Aorta (tissue), 5 donors: ENCODE measurements at regions of chr9 and their contacts with region 1.

Region 1: DNA sequence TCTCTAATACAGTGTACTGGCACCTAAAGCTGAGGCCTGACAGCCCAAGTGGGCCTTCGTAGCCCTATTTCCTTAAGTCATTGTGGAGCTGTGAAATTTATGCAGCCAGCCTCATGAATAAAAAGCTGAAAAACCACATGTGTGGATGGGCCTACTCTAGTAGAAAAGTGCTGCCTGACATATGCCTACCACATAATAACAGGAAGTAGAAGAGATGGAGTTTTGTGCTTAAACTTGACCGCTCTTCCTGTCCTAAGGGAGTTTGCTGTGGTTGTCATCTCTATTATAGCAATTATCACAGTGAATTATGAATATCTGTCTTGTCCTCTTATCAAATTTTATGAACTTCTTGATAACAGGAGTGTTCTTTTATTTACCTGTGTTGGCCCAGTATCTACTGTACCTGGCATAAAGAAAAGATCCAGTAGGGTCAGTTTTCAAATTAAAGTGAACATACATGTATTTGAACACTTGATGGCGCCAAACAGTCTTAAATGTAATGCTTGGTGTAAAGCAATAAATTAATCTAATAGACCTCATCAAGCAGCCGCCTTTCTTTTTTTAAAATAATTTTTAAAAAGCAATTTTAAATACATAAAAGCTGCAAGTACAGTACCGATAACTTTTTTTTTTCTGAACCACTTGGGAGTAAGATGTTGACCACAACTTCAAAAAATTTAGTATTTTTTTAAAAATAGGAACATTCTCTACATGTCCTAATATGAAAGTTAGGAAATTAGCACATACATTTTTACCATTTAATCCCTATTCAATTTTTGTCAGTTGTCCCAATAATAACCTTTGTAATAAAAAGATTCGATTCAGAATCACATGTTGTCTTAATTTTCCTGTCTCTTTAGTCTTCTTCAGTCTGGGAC is 51.0 kb downstream of the FKTN start:
- DNase-seq: no peak
- ATAC-seq: no peak
- H3K4me3 ChIP-seq: no peak overlapping the region
- H3K27ac ChIP-seq: no peak overlapping the region
- H3K4me1 ChIP-seq: no peaks in the 10 kb centered on the region
- H3K27me3 ChIP-seq: no peaks in the 10 kb centered on the region

Region 2: DNA sequence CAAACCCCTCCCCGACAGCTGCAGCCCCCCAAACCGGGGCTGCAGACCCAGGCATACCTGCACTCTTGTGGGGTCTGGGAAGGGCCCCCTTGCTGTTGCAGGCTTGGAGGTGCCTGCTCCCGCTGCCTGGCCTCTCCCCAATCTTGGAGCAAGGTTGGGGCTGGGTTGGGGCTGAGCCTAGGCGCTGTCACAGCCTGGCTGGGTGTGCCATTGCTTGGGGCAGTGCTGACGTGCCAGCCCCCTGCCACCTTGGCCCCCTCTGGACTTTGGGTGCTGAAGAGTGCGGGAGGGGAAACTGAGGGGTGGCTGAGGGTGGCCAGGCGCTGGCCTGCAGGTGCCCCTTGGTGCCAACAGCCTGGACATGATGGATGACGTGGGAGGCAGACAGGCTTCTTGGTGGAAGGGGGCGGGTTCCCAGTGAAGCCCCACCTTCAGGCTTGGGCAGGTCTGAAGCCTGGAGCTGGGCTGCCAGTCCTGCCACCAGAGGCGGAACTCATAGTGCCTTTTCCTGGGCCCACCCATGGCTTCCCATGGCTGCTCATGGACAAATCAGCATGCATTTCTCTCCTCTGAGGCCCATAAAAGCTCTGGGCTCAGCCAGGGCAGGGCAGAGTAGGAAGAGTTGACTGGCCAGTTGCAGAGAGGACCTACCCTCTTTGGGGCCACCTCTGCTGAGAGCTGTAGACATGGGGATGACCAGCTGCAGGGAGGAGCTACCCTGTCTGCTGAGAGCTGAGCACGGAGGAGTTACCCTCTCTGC is 104.5 kb after region 1 on chr9:
- intact Hi-C with region 1: loop called (anchors 2 to 5 kb)
- DNase-seq: no peak
- ATAC-seq: peak; percentile 33
- H3K4me3 ChIP-seq: no peak overlapping the region
- H3K27ac ChIP-seq: no peak overlapping the region
- H3K4me1 ChIP-seq: no peaks in the 10 kb centered on the region
- H3K27me3 ChIP-seq: no peaks in the 10 kb centered on the region

Region 3: DNA sequence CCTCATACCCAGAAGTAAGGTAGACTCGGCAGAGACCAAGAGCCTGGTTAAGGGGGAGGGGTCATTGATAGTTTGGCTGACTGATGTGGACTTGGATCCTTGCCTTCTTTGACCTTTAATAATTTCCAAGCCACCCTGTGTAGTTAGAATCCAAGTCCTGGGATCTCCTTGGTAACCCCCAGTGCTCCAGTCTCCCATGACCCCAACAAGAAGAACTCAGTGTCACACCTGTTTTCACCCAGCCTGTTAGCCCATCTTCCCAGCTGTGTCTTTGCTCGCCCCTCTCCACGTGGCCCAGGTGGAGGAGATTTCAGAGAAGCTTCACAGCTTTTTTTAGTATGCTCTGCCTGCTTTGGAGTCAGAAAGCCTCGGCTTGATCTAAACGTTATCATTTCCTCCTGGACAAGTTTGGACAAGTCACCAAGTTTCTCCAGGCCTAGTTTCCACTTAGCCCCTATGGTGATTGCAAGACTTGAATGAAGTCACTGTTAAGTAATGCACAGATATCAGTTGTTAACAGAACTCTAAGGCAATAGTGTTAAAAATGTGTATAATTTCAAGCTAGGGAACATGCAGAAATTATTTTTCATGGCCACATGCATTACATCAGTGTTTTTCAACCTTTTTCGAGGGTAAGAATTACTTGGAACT is 255.4 kb after region 1 on chr9:
- intact Hi-C with region 1: no loop called
- DNase-seq: no peak
- ATAC-seq: no peak
- H3K4me3 ChIP-seq: no peak overlapping the region
- H3K27ac ChIP-seq: no peak overlapping the region
- H3K4me1 ChIP-seq: no peaks in the 10 kb centered on the region
- H3K27me3 ChIP-seq: no peaks in the 10 kb centered on the region